ENCODE measurements at regions of chr14 and their contacts with region 1.

Region 1: DNA sequence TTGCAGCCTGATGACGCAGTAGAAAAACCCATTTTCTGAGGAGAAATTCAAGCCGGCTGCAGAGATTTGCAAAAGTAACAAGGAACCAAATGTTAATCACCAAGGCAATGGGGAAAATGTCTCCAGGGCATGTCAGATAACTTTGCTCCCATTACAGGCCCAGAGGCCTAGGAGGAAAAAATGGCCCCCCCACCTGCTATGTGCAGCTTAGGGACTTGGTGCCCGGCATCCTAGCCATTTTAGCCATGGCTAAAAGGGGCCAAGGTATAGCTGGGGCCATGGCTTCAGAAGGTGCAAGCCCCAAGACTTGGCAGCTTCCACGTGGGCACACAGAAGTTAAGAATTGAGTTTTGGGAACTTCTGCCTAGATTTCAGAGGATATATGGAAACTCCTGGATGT is 351.9 kb downstream of the RGS6 start:
- DNase-seq: no peak
- H3K4me3 ChIP-seq: no peak overlapping the region
- H3K27ac ChIP-seq: no peak overlapping the region
- H3K4me1 ChIP-seq: no peaks in the 10 kb centered on the region
- H3K27me3 ChIP-seq: no peaks in the 10 kb centered on the region
- CTCF ChIP-seq: no peak
- POLR2A ChIP-seq: no peak

Region 2: GRCh38 chr14:71932220-71932981 is 351.8 kb before region 1 on chr14 and contains the start of gene RGS6:
- intact Hi-C with region 1: loop called (anchors 10 kb)
- DNase-seq: peak in 1 of 2 donors; percentile 80
- H3K4me3 ChIP-seq: peak within 1 kb of the TSS; percentile 42 to 70 (median 43)
- H3K27ac ChIP-seq: peak within 1 kb of the TSS in 2 of 3 donors; percentile 48 to 54
- H3K4me1 ChIP-seq: no peaks in the 10 kb centered on the region
- H3K27me3 ChIP-seq: no peaks in the 10 kb centered on the region
- CTCF ChIP-seq: peak in 4 of 6 experiments; percentile 38 to 72 (median 69)
- POLR2A ChIP-seq: peak in 1 of 2 donors; percentile 29
- total RNA-seq, gene RGS6: 7.6 to 25.3 (median 17.2) TPM